ENCODE measurements at regions of chr15 and their contacts with region 1.

Region 1: GRCh38 chr15:23648920-23649515 is 1.4 kb upstream of the MAGEL2 start:
- DNase-seq: no peak
- H3K4me3 ChIP-seq: no peak overlapping the region
- H3K27ac ChIP-seq: no peak overlapping the region
- H3K27me3 ChIP-seq: peaks cover 2% of the 10 kb centered on the region
- CTCF ChIP-seq: peak; percentile 51

Region 2: GRCh38 chr15:23857028-23857641 is 208.1 kb after region 1 on chr15:
- CTCF ChIA-PET with region 1: interaction called, 16 read pairs
- POLR2A ChIA-PET with region 1: no interaction called
- DNase-seq: no peak
- H3K4me3 ChIP-seq: no peak overlapping the region
- H3K27ac ChIP-seq: no peak overlapping the region
- H3K27me3 ChIP-seq: no peaks in the 10 kb centered on the region
- CTCF ChIP-seq: peak; percentile 55

Measured in AG04450 (cell line).